PC-3 (cell line): ENCODE measurements at regions of chr1 and their contacts with region 1.

Region 1: DNA sequence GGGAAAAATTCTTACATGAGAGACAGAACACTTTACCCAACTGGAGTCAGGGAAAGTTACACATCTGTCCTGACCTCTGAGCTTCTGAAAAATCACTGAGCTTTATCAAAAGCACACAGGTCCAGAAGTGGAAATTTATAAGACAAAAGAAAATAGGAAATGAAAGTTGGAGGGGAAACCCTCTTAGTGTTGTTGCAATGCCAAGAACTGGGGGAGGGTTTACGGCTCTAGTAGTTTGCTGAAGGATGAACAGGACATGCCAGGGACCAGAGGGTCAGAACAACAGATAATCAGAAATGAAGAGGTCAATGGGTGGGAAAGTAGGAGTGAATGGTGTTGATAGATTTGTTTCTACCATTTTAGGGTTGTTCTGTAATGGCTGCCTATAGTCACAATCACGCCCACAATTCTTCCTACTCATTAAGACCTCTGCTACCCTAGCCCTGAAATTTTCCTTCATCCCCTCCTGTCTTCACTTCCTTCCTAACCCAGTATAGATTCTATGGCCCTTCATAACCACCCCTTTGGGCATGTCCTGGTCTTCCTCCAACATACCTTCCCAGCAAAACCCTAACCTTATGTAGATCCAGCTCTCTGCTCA is 30.3 kb upstream of the FMOD start:
- DNase-seq: no peak
- ATAC-seq: no peak
- H3K4me3 ChIP-seq: no peak overlapping the region
- H3K27ac ChIP-seq: no peak overlapping the region
- H3K4me1 ChIP-seq: no peaks in the 10 kb centered on the region
- H3K27me3 ChIP-seq: peaks cover 81% of the 10 kb centered on the region
- CTCF ChIP-seq: no peak

Region 2: DNA sequence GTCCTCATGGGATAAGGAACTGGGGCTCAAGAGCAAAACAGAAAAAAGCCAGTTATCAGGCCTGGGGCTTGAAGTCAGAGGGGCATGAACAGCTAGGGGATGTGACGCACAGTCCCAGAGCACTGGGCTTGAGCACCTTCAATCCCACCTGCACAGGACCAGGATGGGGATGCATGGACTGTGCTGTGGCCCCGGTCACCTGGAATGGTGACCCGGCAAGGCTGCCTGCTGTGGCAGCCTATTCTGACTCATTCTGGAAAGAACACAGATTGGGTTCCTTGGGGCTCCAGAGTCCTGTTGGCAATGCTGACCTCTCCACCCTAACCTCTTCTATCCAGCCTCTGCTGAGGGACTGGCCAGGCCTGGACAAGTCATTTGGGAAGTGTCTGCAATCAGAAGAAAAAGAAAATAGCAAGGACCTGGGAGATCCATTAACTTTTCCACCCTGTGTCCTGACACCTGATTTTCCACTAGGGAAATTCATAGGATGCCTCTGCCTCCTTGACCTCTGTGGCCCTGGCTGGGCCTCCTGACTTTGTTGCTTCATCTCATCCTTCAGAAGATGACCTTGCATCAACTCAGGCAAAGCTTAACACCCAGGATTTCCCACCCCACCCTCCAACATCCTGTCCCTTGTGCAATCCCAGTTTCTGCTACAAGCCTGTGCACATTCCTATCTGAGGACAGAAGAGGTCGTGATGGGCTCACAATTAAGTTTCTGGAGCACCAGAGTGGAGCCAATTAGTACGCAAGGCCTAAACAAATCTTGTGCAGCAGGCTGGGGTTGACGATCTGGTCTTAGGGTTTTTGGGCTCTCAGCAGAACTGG is 12.4 kb before region 1 on chr1:
- CTCF ChIA-PET with region 1: no interaction called
- POLR2A ChIA-PET with region 1: no interaction called
- intact Hi-C with region 1: no loop called
- DNase-seq: peak; percentile 14
- ATAC-seq: no peak
- H3K4me3 ChIP-seq: no peak overlapping the region
- H3K27ac ChIP-seq: no peak overlapping the region
- H3K4me1 ChIP-seq: no peaks in the 10 kb centered on the region
- H3K27me3 ChIP-seq: peaks cover 72% of the 10 kb centered on the region
- CTCF ChIP-seq: 0 out of 2 replicates have a peak, but pooled peaks have one; percentile 19

Region 3: GRCh38 chr1:203428981-203429599 is 47.8 kb after region 1 on chr1:
- CTCF ChIA-PET with region 1: no interaction called
- POLR2A ChIA-PET with region 1: no interaction called
- intact Hi-C with region 1: no loop called
- DNase-seq: no peak
- ATAC-seq: no peak
- H3K4me3 ChIP-seq: no peak overlapping the region
- H3K27ac ChIP-seq: no peak overlapping the region
- H3K4me1 ChIP-seq: 0 out of 2 replicates have a peak, but pooled peaks cover 5% of the 10 kb centered on the region
- H3K27me3 ChIP-seq: peaks cover 78% of the 10 kb centered on the region
- CTCF ChIP-seq: no peak

Region 4: DNA sequence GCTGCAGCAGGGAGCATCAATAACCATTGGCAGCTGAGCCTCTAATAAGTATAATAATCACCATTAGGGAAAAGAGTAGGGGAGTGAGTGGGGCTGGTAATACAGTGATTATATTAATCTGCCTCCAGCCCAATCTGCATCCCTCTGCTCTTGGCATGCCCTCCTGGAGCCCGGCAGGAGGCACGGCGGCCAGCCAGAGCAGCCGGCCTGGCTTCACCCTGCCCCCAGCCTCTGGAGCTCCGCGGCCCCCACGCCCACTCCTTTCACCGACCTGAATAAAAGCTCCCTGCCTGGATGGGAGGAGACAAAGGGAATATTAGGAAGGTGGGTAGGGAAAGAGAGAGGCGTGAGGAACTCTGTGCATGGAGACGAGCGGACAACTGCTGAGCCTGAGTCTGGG is 141.0 kb after region 1 on chr1:
- CTCF ChIA-PET with region 1: no interaction called
- POLR2A ChIA-PET with region 1: no interaction called
- intact Hi-C with region 1: no loop called
- DNase-seq: no peak
- ATAC-seq: no peak
- H3K4me3 ChIP-seq: no peak overlapping the region
- H3K27ac ChIP-seq: no peak overlapping the region
- H3K4me1 ChIP-seq: peaks cover 31% of the 10 kb centered on the region
- H3K27me3 ChIP-seq: no peaks in the 10 kb centered on the region
- CTCF ChIP-seq: no peak

Region 5: DNA sequence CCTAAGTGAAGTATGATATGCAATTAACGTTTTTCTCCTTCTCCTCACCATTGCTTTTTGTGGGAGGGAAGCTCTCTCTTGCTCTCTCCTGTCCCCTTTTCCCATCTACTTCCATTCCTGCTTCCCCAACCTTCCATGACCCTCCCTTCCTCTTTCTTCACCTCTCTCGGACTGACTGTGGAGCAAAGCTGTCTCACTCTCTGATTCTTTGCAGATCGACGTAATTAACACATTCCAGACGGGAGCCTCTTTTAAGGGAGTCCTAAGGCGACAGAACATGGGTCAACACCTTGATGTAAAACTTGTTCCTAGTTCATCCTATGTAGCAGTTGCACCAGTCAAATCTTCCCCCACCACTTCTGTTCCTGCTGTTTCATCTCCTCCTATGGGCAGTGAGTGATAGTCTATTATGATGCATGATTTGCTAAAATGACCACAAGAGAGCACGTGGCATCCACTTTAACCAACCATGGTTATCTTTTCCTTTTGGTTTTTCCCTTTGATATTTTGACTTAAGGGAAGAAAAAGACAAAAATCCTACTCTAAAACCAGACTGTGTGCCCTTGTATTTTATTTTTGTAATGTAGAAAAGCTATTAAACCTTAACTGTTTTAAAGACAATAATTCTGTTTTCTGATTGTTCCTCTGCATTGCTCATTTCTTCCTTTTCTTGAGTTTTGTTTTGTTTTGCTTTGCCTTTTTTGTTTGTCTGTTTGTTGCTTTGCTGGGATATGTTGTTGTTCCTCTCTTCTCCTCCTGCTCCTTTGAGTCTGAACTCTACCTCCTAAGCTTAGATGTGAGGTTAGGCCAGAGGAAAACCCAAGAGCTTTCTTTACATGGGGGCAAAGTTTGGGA is 352.0 kb after region 1 on chr1:
- CTCF ChIA-PET with region 1: no interaction called
- POLR2A ChIA-PET with region 1: interaction called, 22 read pairs
- intact Hi-C with region 1: no loop called
- DNase-seq: no peak
- ATAC-seq: no peak
- H3K4me3 ChIP-seq: no peak overlapping the region
- H3K27ac ChIP-seq: no peak overlapping the region
- H3K4me1 ChIP-seq: no peaks in the 10 kb centered on the region
- H3K27me3 ChIP-seq: no peaks in the 10 kb centered on the region
- CTCF ChIP-seq: no peak